ENCODE measurements at regions of chr1 and their contacts with region 1.

Region 1: GRCh38 chr1:26833432-26834405 is 7.2 kb downstream of the ZDHHC18 start:
- DNase-seq: peak; percentile 83 to 98
- ATAC-seq: peak; percentile 93 to 98 (median 96)
- H3K4me3 ChIP-seq: peak overlapping the region; percentile 17
- H3K4me3 Mint-ChIP-seq: peak overlapping the region; percentile 87
- H3K27ac ChIP-seq: peak overlapping the region; percentile 98
- H3K27ac Mint-ChIP-seq: peak overlapping the region; percentile 99 to 100
- H3K4me1 ChIP-seq: peaks cover 70% of the 10 kb centered on the region
- H3K4me1 Mint-ChIP-seq: peaks cover 64 to 68% of the 10 kb centered on the region in 2 donors
- H3K27me3 ChIP-seq: no peaks in the 10 kb centered on the region
- H3K27me3 Mint-ChIP-seq: no peaks in the 10 kb centered on the region
- CTCF ChIP-seq: peak; percentile 25

Region 2: DNA sequence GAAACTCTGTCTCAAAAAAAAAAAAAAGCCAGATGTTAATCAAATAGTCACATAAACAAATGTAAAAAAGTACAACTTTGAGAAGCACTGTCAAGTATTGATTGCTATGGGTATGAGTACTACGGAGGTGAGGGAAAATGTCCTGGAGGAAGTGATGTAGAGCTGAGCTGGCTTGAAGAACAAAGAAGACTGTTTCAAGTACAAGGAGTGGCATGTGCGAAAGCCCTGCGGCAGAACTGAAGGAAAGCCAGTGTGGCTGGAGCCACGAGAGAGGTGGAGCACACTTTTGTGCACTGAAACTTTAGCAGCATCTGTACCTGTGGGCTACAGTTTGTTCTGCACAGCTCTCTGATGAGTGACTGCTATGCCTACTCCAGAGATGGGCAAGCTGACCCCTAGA is 309.5 kb before region 1 on chr1:
- intact Hi-C with region 1: no loop called
- DNase-seq: no peak
- ATAC-seq: no peak
- H3K4me3 ChIP-seq: no peak overlapping the region
- H3K4me3 Mint-ChIP-seq: no peak overlapping the region
- H3K27ac ChIP-seq: no peak overlapping the region
- H3K27ac Mint-ChIP-seq: no peak overlapping the region
- H3K4me1 ChIP-seq: peaks cover 3% of the 10 kb centered on the region
- H3K4me1 Mint-ChIP-seq: peaks cover 2 to 6% of the 10 kb centered on the region in 2 donors
- H3K27me3 ChIP-seq: no peaks in the 10 kb centered on the region
- H3K27me3 Mint-ChIP-seq: no peaks in the 10 kb centered on the region
- CTCF ChIP-seq: no peak

Region 3: GRCh38 chr1:26811057-26811456 is 22.7 kb before region 1 on chr1:
- intact Hi-C with region 1: loop called (anchors 2 kb)
- DNase-seq: peak in 1 of 2 donors; percentile 64
- ATAC-seq: peak in 2 of 3 donors; percentile 32 to 58
- H3K4me3 ChIP-seq: no peak overlapping the region
- H3K4me3 Mint-ChIP-seq: peak overlapping the region; percentile 71
- H3K27ac ChIP-seq: peak overlapping the region; percentile 54
- H3K27ac Mint-ChIP-seq: peak overlapping the region; percentile 90 to 93
- H3K4me1 ChIP-seq: peaks cover 15% of the 10 kb centered on the region
- H3K4me1 Mint-ChIP-seq: peaks cover 13 to 15% of the 10 kb centered on the region in 2 donors
- H3K27me3 ChIP-seq: no peaks in the 10 kb centered on the region
- H3K27me3 Mint-ChIP-seq: no peaks in the 10 kb centered on the region
- CTCF ChIP-seq: no peak

Region 4: GRCh38 chr1:26913754-26914619 is 80.3 kb after region 1 on chr1 and contains the start of gene NR0B2:
- intact Hi-C with region 1: no loop called
- DNase-seq: no peak
- ATAC-seq: no peak
- H3K4me3 ChIP-seq: no peak within 1 kb of the TSS
- H3K4me3 Mint-ChIP-seq: no peak within 1 kb of the TSS
- H3K27ac ChIP-seq: no peak within 1 kb of the TSS
- H3K27ac Mint-ChIP-seq: no peak within 1 kb of the TSS
- H3K4me1 ChIP-seq: no peaks in the 10 kb centered on the region
- H3K4me1 Mint-ChIP-seq: no peaks in the 10 kb centered on the region
- H3K27me3 ChIP-seq: no peaks in the 10 kb centered on the region
- H3K27me3 Mint-ChIP-seq: no peaks in the 10 kb centered on the region
- CTCF ChIP-seq: no peak
- total RNA-seq, gene NR0B2: not detected

Region 5: DNA sequence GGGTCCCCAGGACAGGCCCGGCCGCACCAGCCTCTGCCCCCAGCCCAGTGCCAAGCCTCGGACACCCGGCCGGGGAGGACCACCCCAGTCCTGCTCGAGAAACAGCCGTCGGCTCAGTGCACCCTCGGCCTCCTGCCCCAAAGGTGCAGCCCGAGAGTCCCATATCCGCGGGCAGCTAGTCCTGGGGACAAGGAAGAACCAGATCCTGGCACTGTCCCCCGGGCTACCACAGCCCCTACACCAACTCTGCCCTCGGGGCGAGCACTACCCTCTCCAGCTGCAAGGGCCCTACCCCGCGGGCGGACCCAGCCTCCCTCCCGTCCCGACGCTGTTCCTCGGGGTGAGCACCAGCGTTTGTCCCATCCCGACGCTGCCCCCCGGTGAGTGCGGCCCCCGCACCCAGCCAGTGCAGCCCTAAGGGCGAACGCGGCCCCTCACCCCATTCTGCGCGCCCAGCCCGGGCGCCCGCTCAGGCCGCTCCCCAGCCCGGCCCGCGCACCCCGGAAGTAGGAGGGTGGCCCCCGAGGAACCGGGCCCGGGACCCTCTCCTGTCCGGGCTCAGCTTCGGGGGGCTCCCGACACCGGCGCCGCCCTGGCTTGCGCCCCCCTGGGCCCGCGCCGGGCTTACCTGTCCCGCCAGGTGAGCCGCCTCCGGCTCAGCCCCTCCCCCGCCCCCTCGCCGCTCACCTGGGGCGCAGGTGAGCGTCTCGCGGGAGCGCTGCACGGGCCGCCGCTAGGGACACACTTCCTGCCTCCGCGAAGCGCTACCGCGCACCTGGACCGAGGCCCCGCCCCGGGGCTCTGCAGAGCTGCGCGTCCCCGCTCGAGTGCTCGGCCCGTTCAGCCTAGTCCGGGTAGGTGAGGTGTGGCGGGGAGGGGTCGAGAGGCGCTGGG is 126.2 kb after region 1 on chr1 and contains the start of gene KDF1:
- intact Hi-C with region 1: no loop called
- DNase-seq: peak in 1 of 2 donors; percentile 78
- ATAC-seq: peak; percentile 53 to 75 (median 72)
- H3K4me3 ChIP-seq: peak within 1 kb of the TSS; percentile 32
- H3K4me3 Mint-ChIP-seq: peak within 1 kb of the TSS; percentile 80
- H3K27ac ChIP-seq: no peak within 1 kb of the TSS
- H3K27ac Mint-ChIP-seq: peak within 1 kb of the TSS in 1 of 2 donors; percentile 10
- H3K4me1 ChIP-seq: peaks cover 12% of the 10 kb centered on the region
- H3K4me1 Mint-ChIP-seq: peaks cover 6% of the 10 kb centered on the region in 2 donors
- H3K27me3 ChIP-seq: peaks cover 18% of the 10 kb centered on the region
- H3K27me3 Mint-ChIP-seq: peaks cover 34 to 46% of the 10 kb centered on the region in 2 donors
- CTCF ChIP-seq: no peak
- total RNA-seq, gene KDF1: 0.20 to 0.52 TPM in 2 of 3 donors, not detected in the other

Measured in natural killer cell (primary cell).